ENCODE measurements at regions of chr11 and their contacts with region 1.

Region 1: GRCh38 chr11:65083834-65084597 is at the starts of genes CDCA5 and ZFPL1:
- DNase-seq: peak; percentile 97
- H3K4me3 ChIP-seq: peak within 1 kb of the TSS; percentile 91
- H3K27ac ChIP-seq: peak within 1 kb of the TSS; percentile 74
- H3K4me1 ChIP-seq: peaks cover 49% of the 10 kb centered on the region
- CTCF ChIP-seq: no peak
- total RNA-seq, gene CDCA5: 119 and 135 TPM in 2 replicates
- total RNA-seq, gene ZFPL1: 39.5 and 43.9 TPM in 2 replicates

Region 2: DNA sequence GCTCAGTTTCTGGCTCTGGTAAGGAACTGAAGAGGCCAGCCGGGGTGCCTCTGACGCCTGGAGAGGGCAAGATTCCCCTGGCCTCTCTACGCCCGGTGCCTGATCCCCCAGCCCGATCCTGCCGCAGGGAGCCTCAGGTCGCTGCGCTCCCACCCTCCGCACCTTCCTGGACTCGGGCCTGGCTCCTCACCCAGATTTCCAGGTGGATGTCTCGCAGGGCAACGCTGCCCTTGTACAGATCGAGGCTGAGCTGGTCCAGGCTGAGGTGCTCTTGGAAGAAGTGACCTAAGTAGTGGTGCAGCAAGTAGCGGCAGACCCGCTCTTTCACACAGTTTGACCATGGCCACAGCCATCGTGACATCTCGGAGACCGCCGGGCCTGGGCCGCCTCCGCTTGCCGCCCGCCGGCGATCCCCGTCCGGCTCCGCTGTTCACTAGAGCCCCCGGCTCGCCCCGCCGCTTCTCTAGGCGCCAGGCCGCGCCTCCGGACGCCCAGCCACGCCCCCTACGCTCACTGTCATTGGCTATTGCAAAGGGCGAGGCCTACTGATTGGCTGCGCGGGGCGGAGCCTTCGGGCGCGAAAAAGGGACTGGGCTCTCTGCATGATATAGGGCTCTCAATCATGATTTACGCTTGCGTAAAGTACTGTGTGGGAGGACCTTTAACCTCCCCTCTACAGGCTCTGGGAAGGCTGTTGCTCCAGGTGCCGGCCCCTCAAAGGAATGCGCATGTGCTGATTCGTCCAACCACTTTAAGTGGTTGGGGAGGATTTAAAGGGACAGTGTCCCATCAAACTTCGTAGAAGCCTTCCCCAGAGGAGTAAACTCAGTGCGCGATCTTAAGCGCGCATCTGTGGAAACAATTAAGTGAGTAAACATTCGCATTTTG is 167.0 kb before region 1 on chr11 and contains the start of gene ATG2A:
- CTCF ChIA-PET with region 1: no interaction called
- POLR2A ChIA-PET with region 1: no interaction called
- intact Hi-C with region 1: loop called (anchors 10 kb)
- DNase-seq: peak; percentile 100
- H3K4me3 ChIP-seq: peak within 1 kb of the TSS; percentile 87
- H3K27ac ChIP-seq: peak within 1 kb of the TSS; percentile 63
- H3K4me1 ChIP-seq: peaks cover 32% of the 10 kb centered on the region
- CTCF ChIP-seq: no peak
- total RNA-seq, gene ATG2A: 18.1 and 29.0 TPM in 2 replicates

Region 3: DNA sequence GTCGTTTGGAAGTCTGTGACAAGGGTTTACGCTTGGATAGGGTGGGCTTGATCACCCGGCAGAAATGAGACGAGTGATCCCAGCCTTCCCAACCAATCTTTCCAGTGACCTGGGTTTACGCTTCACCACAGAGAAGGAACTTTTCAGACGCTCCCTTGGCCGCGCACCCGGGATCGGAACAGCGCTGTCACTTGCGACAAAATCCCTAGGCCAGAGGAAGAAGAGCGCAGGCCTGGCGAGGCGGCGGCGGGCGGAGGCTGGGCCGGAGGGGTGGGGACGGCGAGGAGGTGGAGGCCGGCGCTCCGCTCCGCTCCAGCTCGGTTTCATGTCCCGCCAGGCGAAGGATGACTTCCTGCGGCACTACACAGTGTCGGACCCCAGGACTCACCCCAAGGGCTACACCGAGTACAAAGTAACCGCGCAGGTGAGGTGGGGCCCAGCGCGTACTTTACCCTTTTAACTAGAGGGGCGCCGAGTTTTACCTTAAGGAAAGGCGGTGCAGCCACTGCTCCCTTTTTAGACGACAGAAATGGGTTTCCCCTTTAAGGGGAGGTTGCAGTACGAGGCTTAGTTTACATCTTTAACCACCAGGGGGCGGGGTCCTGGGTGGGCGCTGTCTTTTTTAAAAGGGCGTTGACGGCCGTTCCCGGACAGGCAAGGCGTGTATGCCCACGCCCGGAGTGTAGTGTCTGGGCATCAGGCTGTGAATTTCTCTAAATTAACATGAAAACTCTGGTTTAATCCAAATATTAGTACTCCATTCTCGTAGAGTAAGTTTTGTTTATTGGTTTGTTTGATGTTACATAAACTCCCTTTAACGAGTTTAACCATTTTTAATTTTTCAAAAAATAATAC is 56.6 kb before region 1 on chr11 and contains the start of gene SNX15:
- CTCF ChIA-PET with region 1: no interaction called
- POLR2A ChIA-PET with region 1: interaction called, 3 read pairs
- intact Hi-C with region 1: loop called (anchors 1 kb)
- DNase-seq: peak; percentile 99
- H3K4me3 ChIP-seq: peak within 1 kb of the TSS; percentile 66
- H3K27ac ChIP-seq: peak within 1 kb of the TSS; percentile 75
- H3K4me1 ChIP-seq: peaks cover 18% of the 10 kb centered on the region
- CTCF ChIP-seq: peak; percentile 57
- total RNA-seq, gene SNX15: 25.9 and 31.6 TPM in 2 replicates

Region 4: DNA sequence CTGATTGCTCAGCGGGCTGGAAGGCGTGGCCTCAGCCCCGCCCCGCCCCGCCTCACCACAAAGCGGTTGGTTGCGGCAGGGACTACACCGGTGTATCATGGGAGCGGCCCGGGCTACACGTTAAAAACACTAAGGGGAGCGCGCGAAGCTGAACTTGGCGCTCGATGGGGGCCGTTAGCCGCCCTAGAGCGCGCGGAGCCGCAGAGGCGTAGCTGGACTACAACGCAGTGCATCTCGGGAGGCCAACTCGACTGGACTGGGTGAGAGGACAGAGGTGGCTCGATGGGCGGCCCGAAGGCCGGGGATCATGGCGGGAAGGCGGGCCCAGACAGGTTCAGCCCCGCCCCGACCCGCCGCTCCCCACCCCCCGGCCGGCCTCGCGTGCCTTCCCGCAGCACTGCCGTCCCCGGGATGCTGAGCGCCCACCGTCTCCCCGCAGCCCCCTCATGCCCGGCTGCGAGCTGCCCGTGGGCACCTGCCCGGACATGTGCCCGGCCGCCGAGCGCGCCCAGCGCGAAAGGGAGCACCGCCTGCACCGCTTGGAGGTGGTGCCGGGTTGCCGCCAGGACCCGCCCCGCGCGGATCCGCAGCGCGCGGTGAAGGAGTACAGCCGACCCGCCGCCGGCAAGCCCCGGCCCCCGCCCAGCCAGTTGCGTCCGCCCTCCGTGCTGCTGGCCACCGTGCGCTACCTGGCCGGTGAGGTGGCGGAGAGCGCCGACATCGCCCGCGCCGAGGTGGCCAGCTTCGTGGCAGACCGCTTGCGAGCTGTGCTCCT is 43.0 kb before region 1 on chr11 and contains the start of gene SAC3D1:
- CTCF ChIA-PET with region 1: no interaction called
- POLR2A ChIA-PET with region 1: interaction called, 7 read pairs
- intact Hi-C with region 1: loop called (anchors 2 kb)
- DNase-seq: peak; percentile 94
- H3K4me3 ChIP-seq: peak within 1 kb of the TSS; percentile 76
- H3K27ac ChIP-seq: peak within 1 kb of the TSS; percentile 84
- H3K4me1 ChIP-seq: peaks cover 36% of the 10 kb centered on the region
- CTCF ChIP-seq: no peak
- total RNA-seq, gene SAC3D1: 23.3 and 28.2 TPM in 2 replicates

Region 5: DNA sequence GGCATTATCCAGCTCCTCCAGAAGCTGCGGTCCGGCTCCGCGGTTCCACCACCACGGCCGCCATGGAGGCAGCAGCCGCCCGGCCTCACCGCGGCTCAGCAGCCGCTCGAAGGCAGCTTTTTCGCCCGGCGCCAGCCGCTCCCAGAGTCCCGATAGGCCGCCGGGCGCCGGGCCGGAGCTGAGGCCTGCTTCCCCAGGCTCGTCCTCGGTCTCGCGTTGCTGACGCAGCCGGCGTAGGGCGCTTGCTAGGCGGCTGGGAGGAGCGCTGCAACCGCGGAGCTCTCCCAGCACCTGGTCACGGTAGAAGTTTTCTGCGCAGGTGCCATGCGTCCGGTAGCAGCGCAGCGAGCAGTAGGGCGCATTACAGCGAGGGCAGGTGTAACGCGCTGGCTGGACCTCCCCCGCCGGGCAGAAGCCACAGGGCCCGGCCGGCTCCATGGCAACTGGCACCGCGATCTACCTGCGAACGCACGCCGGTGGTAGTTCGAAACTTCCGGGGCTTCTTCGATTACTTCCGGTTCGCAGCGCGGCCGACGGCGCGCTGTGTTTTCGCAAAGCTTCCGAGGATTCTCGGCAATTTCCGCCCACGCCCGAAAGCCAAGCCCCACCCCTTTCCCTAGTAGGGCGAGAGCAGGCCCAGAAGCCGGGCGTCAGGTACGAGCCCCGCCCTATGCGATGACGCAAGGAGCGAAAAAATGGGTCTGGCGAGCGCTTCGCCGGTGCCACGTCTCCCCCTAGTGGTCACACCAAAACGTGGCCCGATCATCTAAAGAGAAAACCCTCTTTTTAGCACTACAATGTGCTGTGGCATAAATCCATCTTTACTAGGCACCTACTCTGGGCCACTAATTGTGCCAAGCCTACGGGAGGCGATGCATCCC is 33.4 kb after region 1 on chr11 and contains the start of gene ZNHIT2:
- CTCF ChIA-PET with region 1: no interaction called
- POLR2A ChIA-PET with region 1: interaction called, 4 read pairs
- intact Hi-C with region 1: loop called (anchors 1 kb)
- DNase-seq: peak; percentile 100
- H3K4me3 ChIP-seq: peak within 1 kb of the TSS; percentile 81
- H3K27ac ChIP-seq: peak within 1 kb of the TSS; percentile 78
- H3K4me1 ChIP-seq: peaks cover 62% of the 10 kb centered on the region
- CTCF ChIP-seq: peak; percentile 92
- total RNA-seq, gene ZNHIT2: 29.9 and 32.4 TPM in 2 replicates